ENCODE measurements at regions of chr9 and their contacts with region 1.

Region 1: GRCh38 chr9:36249189-36249588 is 9.1 kb downstream of the GNE start:
- DNase-seq: no peak
- ATAC-seq: no peak
- H3K4me3 ChIP-seq: no peak overlapping the region
- H3K4me3 Mint-ChIP-seq: no peak overlapping the region
- H3K27ac ChIP-seq: no peak overlapping the region
- H3K27ac Mint-ChIP-seq: no peak overlapping the region
- H3K4me1 ChIP-seq: no peaks in the 10 kb centered on the region
- H3K4me1 Mint-ChIP-seq: peaks cover 11 to 19% (median 18%) of the 10 kb centered on the region in 3 donors
- H3K27me3 ChIP-seq: no peaks in the 10 kb centered on the region
- H3K27me3 Mint-ChIP-seq: no peaks in the 10 kb centered on the region

Region 2: GRCh38 chr9:35035851-35036701 is 1213.1 kb before region 1 on chr9:
- CTCF ChIA-PET with region 1: interaction called in 1 of 2 experiments, 10 read pairs
- POLR2A ChIA-PET with region 1: no interaction called
- DNase-seq: peak in 34 of 35 experiments; percentile 2 to 58 (median 34)
- ATAC-seq: peak; percentile 75 to 88 (median 88)
- H3K4me3 ChIP-seq: peak overlapping the region; percentile 18 to 36
- H3K4me3 Mint-ChIP-seq: peak overlapping the region; percentile 46 to 75 (median 59)
- H3K27ac ChIP-seq: no peak overlapping the region
- H3K27ac Mint-ChIP-seq: peak overlapping the region in 1 of 2 donors; percentile 28
- H3K4me1 ChIP-seq: peaks cover 0 to 12% of the 10 kb centered on the region in 2 experiments
- H3K4me1 Mint-ChIP-seq: peaks cover 6 to 11% (median 7%) of the 10 kb centered on the region in 3 donors
- H3K27me3 ChIP-seq: no peaks in the 10 kb centered on the region
- H3K27me3 Mint-ChIP-seq: no peaks in the 10 kb centered on the region

Region 3: GRCh38 chr9:36204906-36205547 is 44.2 kb before region 1 on chr9:
- CTCF ChIA-PET with region 1: no interaction called
- POLR2A ChIA-PET with region 1: no interaction called
- DNase-seq: no peak
- ATAC-seq: no peak
- H3K4me3 ChIP-seq: no peak overlapping the region
- H3K4me3 Mint-ChIP-seq: no peak overlapping the region
- H3K27ac ChIP-seq: no peak overlapping the region
- H3K27ac Mint-ChIP-seq: no peak overlapping the region
- H3K4me1 ChIP-seq: peaks cover 0 to 8% of the 10 kb centered on the region in 2 experiments
- H3K4me1 Mint-ChIP-seq: peaks cover 25 to 49% (median 47%) of the 10 kb centered on the region in 3 donors
- H3K27me3 ChIP-seq: no peaks in the 10 kb centered on the region
- H3K27me3 Mint-ChIP-seq: no peaks in the 10 kb centered on the region

Region 4: DNA sequence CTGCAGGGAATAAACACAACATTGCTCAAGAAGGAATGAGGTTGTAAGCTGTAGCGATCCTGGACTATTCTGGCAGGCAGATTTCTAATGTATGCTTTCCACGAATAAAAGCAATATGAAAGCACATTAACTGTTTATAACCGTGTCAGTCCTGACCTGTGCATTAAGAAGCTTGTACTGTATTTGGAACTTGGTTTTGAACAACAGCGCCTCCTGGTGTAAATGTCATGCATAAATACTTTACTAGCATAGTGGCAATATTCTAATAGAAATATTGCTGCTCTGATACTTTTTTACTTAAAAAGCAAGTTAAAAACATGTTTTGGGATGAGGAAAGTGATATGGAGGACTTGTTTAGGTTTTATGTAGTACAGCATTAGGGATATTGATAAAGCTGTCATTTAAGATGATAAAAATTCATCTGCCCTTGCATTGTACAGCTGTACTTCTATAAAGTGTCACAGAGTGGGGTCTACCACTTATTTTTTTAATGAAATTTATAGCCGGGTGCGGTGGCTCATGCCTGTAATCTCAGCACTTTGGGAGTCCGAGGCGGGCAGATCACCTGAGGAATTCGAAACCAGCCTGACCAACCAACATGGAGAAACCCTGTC is 79.7 kb after region 1 on chr9:
- CTCF ChIA-PET with region 1: interaction called, 11 to 12 read pairs
- POLR2A ChIA-PET with region 1: no interaction called
- DNase-seq: peak in 25 of 35 experiments; percentile 7 to 82 (median 30)
- ATAC-seq: peak; percentile 68 to 73 (median 70)
- H3K4me3 ChIP-seq: no peak overlapping the region
- H3K4me3 Mint-ChIP-seq: no peak overlapping the region
- H3K27ac ChIP-seq: no peak overlapping the region
- H3K27ac Mint-ChIP-seq: no peak overlapping the region
- H3K4me1 ChIP-seq: no peaks in the 10 kb centered on the region
- H3K4me1 Mint-ChIP-seq: peaks cover 3 to 7% (median 6%) of the 10 kb centered on the region in 3 donors
- H3K27me3 ChIP-seq: no peaks in the 10 kb centered on the region
- H3K27me3 Mint-ChIP-seq: no peaks in the 10 kb centered on the region

Measured in T-cell (primary cell).